ENCODE measurements at regions of chr1 and their contacts with region 1.

Region 1: DNA sequence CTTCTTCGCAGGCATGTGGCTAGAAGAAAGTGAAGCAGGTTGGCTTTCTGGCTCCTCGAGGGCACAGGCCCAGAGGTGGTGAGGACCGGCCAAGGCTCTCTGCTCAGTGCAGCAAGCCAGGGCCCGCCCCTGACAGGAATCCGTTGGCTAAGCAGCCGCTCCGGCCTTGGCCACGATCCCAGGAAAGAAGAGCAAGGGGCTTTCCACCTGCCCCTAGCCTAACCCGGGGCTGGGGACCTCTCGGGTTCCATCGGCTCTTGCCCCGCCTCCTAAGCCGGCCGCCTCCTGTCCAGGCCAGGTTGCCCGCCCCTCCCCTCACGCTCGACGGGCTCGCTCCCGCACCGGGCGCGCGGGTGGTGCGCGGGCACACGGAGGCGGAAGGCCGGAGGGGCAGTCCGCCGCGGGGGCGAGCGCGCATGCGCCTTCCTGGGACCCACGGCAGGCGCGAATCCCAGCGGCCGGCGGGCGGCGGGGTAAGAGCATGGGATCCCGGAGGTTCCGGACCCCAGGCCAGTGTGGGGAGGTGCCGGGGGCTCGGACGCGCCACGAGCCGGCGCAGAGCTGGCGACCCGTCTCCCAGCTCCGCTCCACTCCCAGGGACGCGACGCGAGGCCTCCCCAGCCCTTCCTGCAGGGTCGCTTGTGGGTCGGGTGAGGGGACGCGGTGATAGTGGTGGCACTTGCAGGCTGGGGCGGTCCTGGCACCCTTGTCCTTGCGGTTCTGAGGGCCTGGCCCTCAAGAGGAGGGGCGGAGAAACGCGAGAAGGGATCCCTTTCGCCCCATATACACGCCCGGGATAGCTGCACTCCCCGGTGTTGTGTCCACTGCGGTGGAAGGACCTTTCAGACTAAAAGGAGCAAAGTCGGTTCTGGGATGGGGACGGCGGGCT is at the start of gene ALG6:
- DNase-seq: peak; percentile 100
- ATAC-seq: peak; percentile 92
- H3K4me3 Mint-ChIP-seq: peak within 1 kb of the TSS; percentile 98
- H3K27ac Mint-ChIP-seq: peak within 1 kb of the TSS; percentile 86
- H3K4me1 Mint-ChIP-seq: peaks cover 21% of the 10 kb centered on the region
- H3K27me3 Mint-ChIP-seq: peaks cover 9% of the 10 kb centered on the region
- CTCF ChIP-seq: no peak
- total RNA-seq, gene ALG6: 20.0 and 21.5 TPM in 2 replicates

Region 2: GRCh38 chr1:62370594-62370993 is 996.9 kb before region 1 on chr1:
- CTCF ChIA-PET with region 1: no interaction called
- POLR2A ChIA-PET with region 1: no interaction called
- intact Hi-C with region 1: no loop called
- DNase-seq: no peak
- ATAC-seq: no peak
- H3K4me3 Mint-ChIP-seq: no peak overlapping the region
- H3K27ac Mint-ChIP-seq: no peak overlapping the region
- H3K4me1 Mint-ChIP-seq: no peaks in the 10 kb centered on the region
- H3K27me3 Mint-ChIP-seq: peaks cover 1% of the 10 kb centered on the region
- CTCF ChIP-seq: no peak

Region 3: GRCh38 chr1:62765981-62766380 is 601.5 kb before region 1 on chr1:
- CTCF ChIA-PET with region 1: no interaction called
- POLR2A ChIA-PET with region 1: no interaction called
- intact Hi-C with region 1: no loop called
- DNase-seq: no peak
- ATAC-seq: no peak
- H3K4me3 Mint-ChIP-seq: no peak overlapping the region
- H3K27ac Mint-ChIP-seq: no peak overlapping the region
- H3K4me1 Mint-ChIP-seq: no peaks in the 10 kb centered on the region
- H3K27me3 Mint-ChIP-seq: peaks cover 2% of the 10 kb centered on the region
- CTCF ChIP-seq: no peak

Region 4: DNA sequence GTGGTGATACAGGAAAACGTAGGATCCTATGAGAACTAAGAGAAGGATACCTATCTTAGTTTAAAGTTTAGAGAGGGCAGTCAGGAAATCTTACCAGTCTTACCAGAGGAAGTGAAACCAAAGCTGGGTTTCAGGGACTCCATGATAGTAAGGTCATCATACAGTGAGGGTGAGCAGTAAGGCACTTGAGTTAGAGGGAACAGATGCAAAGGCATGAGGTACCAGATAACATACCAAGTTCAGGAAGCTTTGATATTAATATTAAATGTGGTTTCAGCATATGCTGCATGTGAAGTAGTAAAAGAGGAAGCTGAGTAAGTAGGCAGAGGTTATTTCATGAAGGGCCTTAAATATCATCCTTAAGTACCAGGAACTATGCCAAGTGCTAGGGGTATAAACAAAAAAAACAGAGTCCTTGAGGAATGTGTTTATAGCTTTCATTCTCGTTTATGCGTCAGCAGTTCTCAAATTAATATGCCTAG is 566.6 kb before region 1 on chr1:
- CTCF ChIA-PET with region 1: no interaction called
- POLR2A ChIA-PET with region 1: no interaction called
- intact Hi-C with region 1: loop called (anchors 10 kb)
- DNase-seq: no peak
- ATAC-seq: peak; percentile 98
- H3K4me3 Mint-ChIP-seq: peak overlapping the region; percentile 78
- H3K27ac Mint-ChIP-seq: peak overlapping the region; percentile 95
- H3K4me1 Mint-ChIP-seq: peaks cover 61% of the 10 kb centered on the region
- H3K27me3 Mint-ChIP-seq: no peaks in the 10 kb centered on the region
- CTCF ChIP-seq: no peak

Region 5: DNA sequence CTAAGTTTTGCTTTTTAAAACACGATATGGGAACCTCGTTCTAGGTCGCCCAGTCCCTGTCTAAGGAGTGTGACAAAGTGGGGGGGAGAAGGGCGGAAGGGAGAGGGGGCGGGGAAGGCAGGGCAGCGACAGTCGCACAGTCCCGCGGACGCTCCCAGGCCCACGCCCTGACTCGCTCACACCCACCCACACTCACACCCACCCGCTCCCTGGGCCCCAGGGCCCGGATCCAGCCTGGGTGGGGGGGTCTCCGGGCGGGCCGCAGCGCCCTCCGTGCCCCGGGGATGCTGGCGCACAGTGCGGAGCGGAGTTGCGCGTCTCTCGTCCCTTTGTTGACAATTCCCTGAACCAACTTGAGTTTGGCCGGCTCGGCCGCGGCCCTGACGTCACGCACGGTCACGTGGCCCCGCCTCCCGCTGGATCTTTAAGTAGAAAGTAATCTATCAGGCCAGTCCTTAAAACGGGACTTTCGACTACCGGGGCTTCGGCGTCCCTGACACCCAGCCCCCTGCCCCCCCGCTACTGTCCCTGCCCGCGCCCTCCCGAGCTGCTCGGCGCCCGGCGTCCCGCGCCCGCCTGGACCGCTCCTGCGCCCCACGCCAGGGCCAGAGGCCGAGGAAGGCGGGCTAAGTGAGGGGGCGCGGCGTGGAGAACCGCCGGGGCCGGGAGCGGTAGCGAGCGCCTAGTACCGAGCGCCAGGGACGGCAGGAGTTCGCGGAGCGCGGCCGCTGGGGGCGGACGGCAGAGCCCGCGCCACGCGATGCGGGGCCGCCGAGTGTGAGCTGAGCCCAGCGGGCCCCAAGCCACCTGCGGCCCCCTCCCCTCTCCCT is 45.1 kb before region 1 on chr1 and contains the start of gene FOXD3:
- CTCF ChIA-PET with region 1: no interaction called
- POLR2A ChIA-PET with region 1: no interaction called
- intact Hi-C with region 1: loop called (anchors 2 kb)
- DNase-seq: peak; percentile 31
- ATAC-seq: peak; percentile 39
- H3K4me3 Mint-ChIP-seq: peak within 1 kb of the TSS; percentile 78
- H3K27ac Mint-ChIP-seq: peak within 1 kb of the TSS; percentile 77
- H3K4me1 Mint-ChIP-seq: peaks cover 31% of the 10 kb centered on the region
- H3K27me3 Mint-ChIP-seq: peaks cover 57% of the 10 kb centered on the region
- CTCF ChIP-seq: no peak
- total RNA-seq, gene FOXD3: not detected in 2 replicates

Region 6: DNA sequence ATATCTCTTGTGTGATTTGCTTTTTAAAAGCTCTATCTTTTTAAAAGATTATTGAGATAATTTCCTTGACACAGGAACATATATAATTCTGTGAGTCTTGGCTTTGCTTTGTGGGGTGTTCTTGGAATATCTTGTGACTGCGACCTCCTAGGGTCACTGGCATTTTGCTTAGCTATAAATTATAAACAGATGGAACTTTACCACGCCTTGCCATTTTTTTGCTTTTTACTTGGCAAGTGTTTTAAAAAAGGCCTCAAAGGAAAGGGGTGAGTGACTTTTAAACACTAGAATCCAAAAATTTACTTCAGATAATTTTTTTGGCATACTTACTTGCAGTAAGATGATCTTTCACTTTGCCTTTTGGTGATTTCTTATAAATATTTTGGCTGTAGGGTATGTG is 43.6 kb after region 1 on chr1:
- CTCF ChIA-PET with region 1: no interaction called
- POLR2A ChIA-PET with region 1: no interaction called
- intact Hi-C with region 1: no loop called
- DNase-seq: no peak
- ATAC-seq: no peak
- H3K4me3 Mint-ChIP-seq: no peak overlapping the region
- H3K27ac Mint-ChIP-seq: no peak overlapping the region
- H3K4me1 Mint-ChIP-seq: no peaks in the 10 kb centered on the region
- H3K27me3 Mint-ChIP-seq: no peaks in the 10 kb centered on the region
- CTCF ChIP-seq: no peak

Region 7: GRCh38 chr1:63480057-63480456 is 112.6 kb after region 1 on chr1:
- CTCF ChIA-PET with region 1: no interaction called
- POLR2A ChIA-PET with region 1: no interaction called
- intact Hi-C with region 1: no loop called
- DNase-seq: no peak
- ATAC-seq: no peak
- H3K4me3 Mint-ChIP-seq: no peak overlapping the region
- H3K27ac Mint-ChIP-seq: no peak overlapping the region
- H3K4me1 Mint-ChIP-seq: no peaks in the 10 kb centered on the region
- H3K27me3 Mint-ChIP-seq: no peaks in the 10 kb centered on the region
- CTCF ChIP-seq: no peak